ENCODE measurements at regions of chr6 and their contacts with region 1.

Region 1: DNA sequence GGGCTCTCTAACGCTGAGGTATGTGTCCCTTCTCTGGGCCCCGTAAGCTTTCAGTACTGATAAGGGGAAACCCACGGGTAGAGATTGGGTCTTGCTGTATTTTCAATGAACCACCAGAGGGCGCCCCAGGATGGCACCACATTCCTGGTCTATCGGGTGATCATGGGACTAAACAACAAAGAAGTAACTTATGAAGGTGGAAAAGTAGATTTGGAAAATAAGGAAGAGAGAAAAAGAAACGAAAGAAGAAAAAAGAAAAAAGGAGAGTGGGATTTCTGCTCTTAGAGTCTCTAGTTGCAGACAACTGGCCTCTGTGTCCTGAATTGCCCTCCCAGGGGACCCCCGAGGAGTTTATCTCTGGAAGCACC is 93.8 kb downstream of the GMPR start:
- DNase-seq: peak; percentile 80
- CTCF ChIP-seq: peak; percentile 76

Region 2: GRCh38 chr6:16154904-16155303 is 177.3 kb before region 1 on chr6:
- CTCF ChIA-PET with region 1: no interaction called
- POLR2A ChIA-PET with region 1: no interaction called
- DNase-seq: no peak
- CTCF ChIP-seq: no peak

Region 3: DNA sequence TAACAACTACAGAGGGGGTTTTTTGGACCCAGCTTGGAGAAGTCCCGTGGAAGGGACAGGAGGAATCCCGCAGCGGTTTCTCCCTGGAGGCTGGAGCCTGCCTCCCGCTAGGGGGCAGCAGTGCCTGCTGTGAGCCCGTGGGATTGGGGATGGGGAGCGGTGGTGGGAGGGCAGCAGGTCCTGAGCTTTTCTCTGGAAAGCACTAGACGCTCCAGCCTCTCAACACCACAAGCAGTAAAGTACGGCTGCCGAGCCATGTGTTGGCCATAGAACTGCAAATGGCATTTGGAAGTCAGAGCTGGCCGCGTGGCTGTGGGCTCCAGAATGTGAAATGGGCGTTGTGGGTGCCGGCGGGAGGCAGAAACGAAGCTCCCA is 46.0 kb before region 1 on chr6:
- CTCF ChIA-PET with region 1: interaction called, 62 read pairs
- POLR2A ChIA-PET with region 1: no interaction called
- DNase-seq: peak; percentile 74
- CTCF ChIP-seq: peak; percentile 95

Region 4: DNA sequence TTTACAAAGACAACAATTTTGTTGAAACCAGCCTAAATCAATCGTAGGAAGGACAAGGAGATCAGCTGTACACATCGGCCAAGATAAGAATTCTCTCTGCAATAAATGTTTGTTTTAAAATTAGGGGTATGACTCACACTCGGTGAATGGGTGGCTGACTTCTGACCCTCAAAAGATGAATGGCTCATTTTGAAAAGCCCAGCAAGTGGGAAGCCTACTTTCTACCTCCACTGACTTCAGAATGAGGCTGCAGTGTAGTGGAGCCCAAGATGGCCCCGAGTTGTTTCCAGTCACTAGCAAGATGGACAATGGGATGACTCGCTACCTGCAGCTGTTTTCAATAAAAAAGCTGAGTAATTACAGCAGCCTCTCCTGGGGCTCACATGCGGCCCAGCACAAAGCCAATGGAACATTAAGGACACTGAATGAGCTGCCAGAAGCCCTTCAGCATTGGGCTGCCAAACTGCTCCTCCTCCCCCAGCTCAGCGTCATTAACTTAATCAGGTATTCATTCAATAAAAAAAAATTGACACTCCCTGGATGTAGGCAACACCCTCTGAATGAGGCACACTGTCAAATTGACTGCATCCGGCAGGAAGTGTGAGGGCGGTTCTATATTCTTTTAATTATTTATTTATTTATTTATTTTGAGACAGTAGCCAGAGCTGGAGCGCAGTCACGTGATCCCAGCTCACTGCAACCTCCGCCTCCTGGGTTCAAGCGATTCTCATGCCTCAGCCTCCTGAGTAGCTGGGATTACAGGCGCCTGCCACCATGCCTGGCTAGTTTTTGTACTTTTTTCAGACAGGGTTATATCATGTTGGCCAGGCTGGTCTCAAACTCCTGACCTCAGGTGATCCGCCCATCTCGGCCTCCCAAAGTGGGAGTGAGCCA is 13.5 kb after region 1 on chr6:
- CTCF ChIA-PET with region 1: interaction called, 36 read pairs
- POLR2A ChIA-PET with region 1: no interaction called
- DNase-seq: no peak
- CTCF ChIP-seq: no peak

Region 5: DNA sequence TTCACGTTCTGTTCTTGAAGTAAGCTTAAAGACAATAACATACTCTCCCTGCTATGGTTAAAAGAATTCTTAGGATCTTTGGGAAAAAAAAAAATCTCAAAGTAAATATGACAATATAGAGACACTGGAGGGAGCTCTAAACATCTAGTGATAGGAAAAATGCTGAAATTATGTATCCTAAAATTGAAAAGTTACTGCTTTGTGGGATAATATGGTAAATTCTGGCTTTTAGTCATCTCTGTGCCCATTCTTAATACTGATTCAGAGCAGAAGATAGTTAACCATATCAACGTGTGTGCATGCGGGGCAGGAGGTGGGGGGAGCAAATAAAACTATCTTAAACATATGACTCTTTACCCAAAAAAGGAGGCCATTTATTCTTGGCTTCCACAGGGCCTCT is 71.7 kb after region 1 on chr6:
- CTCF ChIA-PET with region 1: interaction called, 36 read pairs
- POLR2A ChIA-PET with region 1: no interaction called
- DNase-seq: no peak
- CTCF ChIP-seq: no peak

Region 6: GRCh38 chr6:16514249-16514648 is 182.1 kb after region 1 on chr6:
- CTCF ChIA-PET with region 1: interaction called, 10 read pairs
- POLR2A ChIA-PET with region 1: no interaction called
- DNase-seq: peak; percentile 42
- CTCF ChIP-seq: peak; percentile 55

Region 7: DNA sequence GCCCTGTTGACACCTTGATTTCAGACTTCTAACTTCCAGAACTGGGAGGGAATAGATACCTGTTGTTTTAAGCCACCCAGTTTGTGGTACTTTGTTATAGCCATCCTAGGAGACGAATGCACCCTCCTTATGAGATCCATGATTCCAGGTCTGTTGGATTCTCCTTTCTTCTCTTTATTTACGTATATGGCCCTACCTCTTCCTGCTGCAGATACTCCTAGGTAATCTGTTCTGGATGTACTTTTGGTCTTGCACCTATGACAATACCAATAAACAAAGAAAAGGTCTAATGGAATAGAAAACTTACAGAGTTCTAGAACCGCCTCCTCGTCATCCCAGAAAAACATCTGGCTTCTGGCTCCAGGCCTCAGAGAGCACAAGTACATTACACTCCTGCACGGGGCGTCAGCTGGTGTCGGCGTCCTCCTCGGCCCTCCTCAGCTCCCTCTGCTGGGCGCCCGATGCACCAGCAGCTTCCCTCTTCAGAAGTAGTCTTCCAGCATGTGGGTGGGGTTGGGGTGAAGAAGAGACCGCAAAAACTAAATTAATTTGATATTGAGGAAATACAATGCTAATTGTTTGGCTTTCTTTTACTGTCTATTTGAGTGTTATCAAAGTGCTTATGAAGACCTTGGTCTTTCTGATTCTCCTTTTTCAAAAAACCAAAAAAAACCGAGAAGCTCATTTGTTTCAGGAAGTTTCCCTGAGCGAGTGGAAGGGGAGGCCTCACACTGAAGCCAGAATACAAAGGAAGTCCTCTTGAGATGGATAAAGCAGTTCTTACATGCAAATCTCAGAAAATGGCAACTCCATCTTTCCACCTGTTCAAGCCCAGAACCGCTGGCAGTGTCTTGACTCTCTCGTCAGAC is 438.8 kb after region 1 on chr6:
- CTCF ChIA-PET with region 1: interaction called, 18 read pairs
- POLR2A ChIA-PET with region 1: no interaction called
- DNase-seq: peak; percentile 78
- CTCF ChIP-seq: peak; percentile 94